Left ventricle myocardium superior (tissue), 1 donor: ENCODE measurements at regions of chr7 and their contacts with region 1.

Region 1: GRCh38 chr7:90155206-90155605 is 937 bp downstream of the STEAP1 start:
- DNase-seq: no peak
- ATAC-seq: no peak

Region 2: DNA sequence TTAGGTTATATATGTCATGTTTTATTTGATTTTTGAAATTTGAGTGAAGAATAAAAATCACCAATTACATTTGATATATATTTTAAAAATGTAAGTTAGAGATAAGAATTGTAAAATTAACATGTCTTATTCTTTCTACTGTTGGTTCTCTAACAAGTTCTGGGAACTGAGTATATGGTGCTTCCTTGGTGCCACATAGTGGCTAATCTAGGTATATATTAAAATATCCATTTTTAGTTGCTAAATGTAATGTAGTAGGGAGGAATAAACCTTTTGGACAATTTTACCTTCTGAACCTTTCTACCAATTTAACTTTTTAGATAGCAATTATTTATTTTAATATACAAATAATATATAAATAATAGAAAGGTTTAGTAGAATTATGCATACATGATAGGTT is 107.2 kb after region 1 on chr7:
- intact Hi-C with region 1: loop called (anchors 2 kb)
- DNase-seq: no peak
- ATAC-seq: peak; percentile 45

Region 3: GRCh38 chr7:90424720-90425119 is 269.5 kb after region 1 on chr7:
- intact Hi-C with region 1: loop called (anchors 5 kb)
- DNase-seq: no peak
- ATAC-seq: no peak

Region 4: DNA sequence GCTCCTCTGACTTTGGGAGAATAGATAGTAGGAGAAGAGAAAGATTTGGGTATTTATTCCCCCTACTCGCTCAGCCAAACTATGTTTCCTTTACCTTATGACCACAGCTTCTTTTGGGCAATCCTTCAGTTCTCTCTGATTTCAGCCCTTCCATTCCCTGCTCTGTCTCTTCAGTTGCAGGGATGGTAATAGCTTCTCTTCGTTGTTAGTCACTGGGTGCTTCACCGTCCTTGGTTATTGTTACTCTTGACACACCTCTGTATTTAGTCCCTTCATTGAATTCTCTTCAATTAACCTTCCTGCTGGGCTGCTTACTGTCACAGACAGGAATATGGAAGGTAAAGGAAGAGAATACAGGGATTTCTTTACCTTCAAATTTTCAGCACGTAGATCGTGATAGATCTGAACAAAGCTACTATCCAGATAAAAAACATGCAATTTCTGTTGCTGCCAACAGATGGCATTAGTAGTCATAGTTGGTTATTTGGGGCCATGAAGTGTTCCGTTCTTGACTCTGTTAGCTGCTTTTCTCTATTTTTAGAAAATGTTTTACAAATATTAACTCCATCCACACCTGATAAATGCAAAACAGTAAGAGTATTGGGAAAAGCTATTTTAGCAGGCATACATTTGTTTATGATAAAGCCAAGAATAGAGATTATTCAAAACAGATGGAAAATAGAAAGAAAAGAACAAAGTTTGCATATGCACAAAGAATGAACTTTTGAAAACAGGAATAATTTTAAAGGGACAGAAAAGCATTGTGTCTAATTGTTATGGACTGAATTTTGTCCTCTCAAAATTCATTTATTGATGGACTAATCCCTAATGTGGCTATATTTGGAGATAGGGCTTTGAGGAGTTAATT is 300.2 kb after region 1 on chr7:
- intact Hi-C with region 1: no loop called
- DNase-seq: no peak
- ATAC-seq: peak; percentile 74